Panc1 (cell line): ENCODE measurements at regions of chr1 and their contacts with region 1.

Region 1: DNA sequence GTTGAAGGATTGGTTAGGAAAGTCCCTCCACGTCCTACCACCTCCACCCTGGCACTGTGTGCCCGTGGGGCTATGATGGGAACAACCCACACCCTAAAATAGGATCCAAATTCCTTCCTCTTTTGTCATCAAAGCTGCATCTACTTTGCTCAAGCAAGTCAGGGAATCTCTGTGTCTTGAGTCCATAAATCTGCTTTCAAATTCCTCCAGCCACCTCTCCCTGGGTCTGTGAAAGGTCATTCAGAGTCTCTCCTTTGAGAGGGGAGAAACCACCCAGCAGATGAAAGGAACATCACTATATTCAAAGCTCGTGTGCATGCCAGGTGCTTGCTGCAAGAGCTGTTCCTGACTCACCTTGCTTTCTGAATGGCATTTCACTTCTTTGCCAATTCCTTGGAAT is 243.6 kb downstream of the TM2D1 start:
- DNase-seq: no peak
- ATAC-seq: no peak
- H3K4me3 ChIP-seq: no peak overlapping the region
- H3K27ac ChIP-seq: no peak overlapping the region
- H3K4me1 ChIP-seq: no peaks in the 10 kb centered on the region
- H3K27me3 ChIP-seq: no peaks in the 10 kb centered on the region
- CTCF ChIP-seq: no peak

Region 2: GRCh38 chr1:60893136-60893745 is 588.1 kb before region 1 on chr1:
- CTCF ChIA-PET with region 1: no interaction called
- POLR2A ChIA-PET with region 1: interaction called, 19 read pairs
- in situ Hi-C with region 1: no loop called
- intact Hi-C with region 1: no loop called
- DNase-seq: no peak
- ATAC-seq: no peak
- H3K4me3 ChIP-seq: no peak overlapping the region
- H3K27ac ChIP-seq: no peak overlapping the region
- H3K4me1 ChIP-seq: no peaks in the 10 kb centered on the region
- H3K27me3 ChIP-seq: peaks cover 9% of the 10 kb centered on the region
- CTCF ChIP-seq: no peak

Region 3: DNA sequence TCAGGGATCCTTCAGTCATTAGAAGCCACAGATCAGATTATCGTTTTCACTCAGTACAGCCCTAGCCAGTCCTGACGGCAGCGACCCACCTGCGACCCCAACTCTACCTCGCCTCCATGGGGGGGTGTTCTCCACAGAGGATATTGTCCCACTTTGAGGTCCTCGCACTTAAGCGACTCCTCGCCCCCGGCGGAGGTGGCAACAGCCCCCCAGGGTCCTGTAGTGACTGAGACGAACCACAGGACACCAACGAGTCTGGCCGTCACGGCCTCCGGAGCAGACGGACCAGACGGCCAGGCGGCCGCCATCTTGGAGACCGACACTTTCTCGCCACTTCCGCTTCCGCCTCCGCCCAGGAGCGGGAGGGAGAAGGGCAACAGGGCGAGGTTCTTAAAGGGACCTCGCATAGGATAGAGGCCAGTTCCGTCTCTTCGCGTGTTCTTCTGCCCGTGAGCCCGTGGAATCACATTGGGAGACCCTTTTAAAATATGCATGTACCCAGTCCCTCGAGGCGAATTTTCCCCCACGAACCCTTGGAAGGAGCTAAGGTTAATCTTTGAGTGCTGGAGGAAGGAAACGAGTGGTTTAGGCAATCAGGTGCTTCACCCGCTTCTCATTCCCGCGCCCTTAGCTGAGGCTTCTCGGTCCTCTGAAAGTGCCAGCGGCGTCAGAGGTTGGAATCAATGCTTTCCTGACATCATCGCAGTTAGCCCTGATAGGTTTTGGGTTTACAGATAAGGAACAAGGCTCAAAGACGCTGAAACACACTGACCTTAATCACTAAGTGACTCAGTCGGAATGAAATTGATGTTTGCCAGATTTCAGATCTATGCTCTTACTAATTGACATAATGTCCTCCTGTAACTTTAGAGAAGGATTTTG is 243.7 kb after region 1 on chr1 and contains the start of gene TM2D1:
- CTCF ChIA-PET with region 1: no interaction called
- POLR2A ChIA-PET with region 1: no interaction called
- in situ Hi-C with region 1: no loop called
- intact Hi-C with region 1: no loop called
- DNase-seq: peak; percentile 82
- ATAC-seq: peak; percentile 100
- H3K4me3 ChIP-seq: peak within 1 kb of the TSS; percentile 95 to 96
- H3K27ac ChIP-seq: peak within 1 kb of the TSS; percentile 97
- H3K4me1 ChIP-seq: peaks cover 12% of the 10 kb centered on the region; the same call in 1 of the 2 replicates
- H3K27me3 ChIP-seq: no peaks in the 10 kb centered on the region
- CTCF ChIP-seq: no peak
- total RNA-seq, gene TM2D1: 43.2 TPM